A673 (cell line): ENCODE measurements at regions of chr6 and their contacts with region 1.

Region 1: DNA sequence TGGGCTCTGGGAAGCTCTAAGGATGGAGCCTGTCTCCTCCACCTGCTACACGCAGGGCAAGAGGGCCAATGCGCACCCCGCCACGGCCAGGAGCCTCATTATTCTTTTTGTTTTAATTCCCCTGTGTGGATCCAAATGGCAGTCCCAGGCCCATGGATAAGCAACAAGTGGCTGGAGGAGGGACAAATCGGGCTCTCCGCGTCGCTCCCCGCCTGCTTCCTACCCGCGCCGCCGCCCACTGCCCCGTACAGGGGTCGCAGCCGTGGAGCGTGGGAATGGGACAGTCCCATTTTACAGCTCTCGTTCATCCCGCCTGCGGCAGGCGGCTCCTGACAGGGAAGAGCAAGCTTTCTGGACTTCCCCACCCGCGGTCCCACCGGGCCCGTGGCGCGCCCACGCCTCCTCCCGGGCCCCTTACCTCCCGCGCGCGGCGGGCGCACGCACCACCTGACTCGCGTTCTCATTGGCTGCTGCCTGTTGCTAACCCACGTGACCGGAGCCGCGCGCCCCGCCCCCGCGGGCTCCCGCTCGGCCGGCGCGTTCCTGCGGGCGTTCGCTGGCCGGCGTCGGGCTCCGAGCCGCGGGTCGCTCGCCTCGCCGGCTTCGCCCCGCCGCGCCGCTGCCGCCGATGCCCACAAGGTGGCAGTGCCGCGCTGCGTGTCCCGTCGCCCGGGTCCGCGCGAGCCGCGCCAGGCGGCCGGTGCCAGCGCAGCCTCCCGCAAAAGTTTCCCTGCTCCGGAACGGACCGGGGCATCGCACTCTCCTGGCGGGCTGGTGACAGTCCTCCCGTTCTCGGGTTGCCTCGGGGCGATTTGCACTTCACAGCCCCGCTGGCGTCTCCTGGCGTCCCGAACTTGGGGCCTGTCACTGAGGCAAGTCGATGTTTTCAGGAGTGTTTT is 93.3 kb downstream of the CD83 start:
- DNase-seq: peak; percentile 96
- H3K4me3 ChIP-seq: peak overlapping the region; percentile 54
- H3K27ac ChIP-seq: peak overlapping the region; percentile 91
- H3K4me1 ChIP-seq: peaks cover 38% of the 10 kb centered on the region
- H3K27me3 ChIP-seq: no peaks in the 10 kb centered on the region
- CTCF ChIP-seq: peak; percentile 47; the same call in 1 of the 2 replicates

Region 2: GRCh38 chr6:14117158-14118090 is 93.5 kb before region 1 on chr6 and contains the start of gene CD83:
- CTCF ChIA-PET with region 1: no interaction called
- POLR2A ChIA-PET with region 1: no interaction called
- intact Hi-C with region 1: no loop called
- DNase-seq: peak; percentile 65
- H3K4me3 ChIP-seq: peak within 1 kb of the TSS; percentile 70
- H3K27ac ChIP-seq: peak within 1 kb of the TSS; percentile 51
- H3K4me1 ChIP-seq: peaks cover 6% of the 10 kb centered on the region
- H3K27me3 ChIP-seq: no peaks in the 10 kb centered on the region
- CTCF ChIP-seq: 0 out of 2 replicates have a peak, but pooled peaks have one; percentile 18
- total RNA-seq, gene CD83: 14.4 and 15.0 TPM in 2 replicates

Region 3: GRCh38 chr6:14388371-14388770 is 177.5 kb after region 1 on chr6:
- CTCF ChIA-PET with region 1: no interaction called
- POLR2A ChIA-PET with region 1: no interaction called
- intact Hi-C with region 1: no loop called
- DNase-seq: no peak
- H3K4me3 ChIP-seq: no peak overlapping the region
- H3K27ac ChIP-seq: no peak overlapping the region
- H3K4me1 ChIP-seq: peaks cover 30% of the 10 kb centered on the region
- H3K27me3 ChIP-seq: no peaks in the 10 kb centered on the region
- CTCF ChIP-seq: no peak

Region 4: DNA sequence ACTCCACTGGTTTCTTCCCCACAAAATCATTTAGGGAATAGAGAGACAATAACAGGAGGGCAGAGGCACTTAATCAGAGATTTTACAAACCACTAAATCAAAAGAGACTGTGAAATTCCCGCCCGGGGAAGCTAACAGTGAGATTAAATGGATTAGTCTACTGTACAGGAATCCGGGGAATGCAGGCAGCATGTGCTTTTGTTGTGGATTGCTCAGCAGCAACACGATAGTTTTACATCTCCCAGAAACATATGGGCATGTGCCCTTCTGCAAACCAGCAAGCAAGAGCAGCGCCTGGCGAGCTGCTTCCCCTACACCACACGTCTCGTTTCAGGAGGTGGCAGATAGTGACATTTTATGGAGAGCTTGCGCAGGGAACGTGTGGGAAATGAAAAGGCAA is 288.9 kb after region 1 on chr6:
- CTCF ChIA-PET with region 1: no interaction called
- POLR2A ChIA-PET with region 1: no interaction called
- intact Hi-C with region 1: loop called (anchors 5 kb)
- DNase-seq: peak; percentile 90
- H3K4me3 ChIP-seq: no peak overlapping the region
- H3K27ac ChIP-seq: peak overlapping the region; percentile 15
- H3K4me1 ChIP-seq: peaks cover 27% of the 10 kb centered on the region
- H3K27me3 ChIP-seq: no peaks in the 10 kb centered on the region
- CTCF ChIP-seq: 0 out of 2 replicates have a peak, but pooled peaks have one; percentile 18

Region 5: GRCh38 chr6:14524319-14524718 is 313.4 kb after region 1 on chr6:
- CTCF ChIA-PET with region 1: no interaction called
- POLR2A ChIA-PET with region 1: no interaction called
- intact Hi-C with region 1: no loop called
- DNase-seq: no peak
- H3K4me3 ChIP-seq: no peak overlapping the region
- H3K27ac ChIP-seq: no peak overlapping the region
- H3K4me1 ChIP-seq: no peaks in the 10 kb centered on the region
- H3K27me3 ChIP-seq: no peaks in the 10 kb centered on the region
- CTCF ChIP-seq: no peak

Region 6: DNA sequence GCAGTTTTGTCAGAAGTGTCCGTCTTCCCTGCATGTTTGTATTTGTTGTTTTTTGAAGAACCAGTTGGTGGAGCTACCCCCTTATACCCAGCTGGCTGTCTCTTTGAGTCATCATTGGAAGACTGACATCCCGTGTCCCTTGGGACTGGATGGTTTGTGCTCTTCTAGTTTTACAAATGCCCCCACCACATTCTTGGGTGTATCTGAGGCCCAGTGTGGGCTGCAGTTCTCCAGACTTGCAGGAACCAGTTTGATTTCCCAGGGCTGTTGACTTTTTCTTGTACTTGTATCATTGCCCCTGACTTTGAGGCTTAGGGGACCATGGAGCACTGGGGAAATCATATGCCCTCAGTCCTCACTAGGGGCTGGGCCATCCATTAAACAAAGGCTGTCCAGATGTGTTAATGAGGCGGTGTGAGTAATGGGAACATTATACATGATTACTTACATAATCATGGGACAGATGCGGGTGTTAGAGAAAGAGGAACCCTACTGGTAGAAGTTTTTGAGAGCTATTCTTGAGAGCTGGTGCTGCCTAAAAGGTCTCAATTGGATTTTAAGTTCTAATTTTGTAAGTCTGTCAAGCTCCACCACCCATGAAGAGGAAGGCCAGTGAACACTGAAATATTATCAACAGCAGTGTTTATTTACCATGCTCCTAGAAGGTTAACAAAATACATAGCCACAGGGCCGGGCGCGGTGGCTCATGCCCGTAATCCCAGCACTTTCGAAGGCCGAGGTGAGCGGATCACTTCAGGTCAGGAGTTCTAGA is 1043.3 kb after region 1 on chr6:
- CTCF ChIA-PET with region 1: no interaction called
- POLR2A ChIA-PET with region 1: no interaction called
- intact Hi-C with region 1: loop called (anchors 5 kb)
- DNase-seq: peak; percentile 96
- H3K4me3 ChIP-seq: no peak overlapping the region
- H3K27ac ChIP-seq: peak overlapping the region; percentile 5
- H3K4me1 ChIP-seq: peaks cover 94% of the 10 kb centered on the region
- H3K27me3 ChIP-seq: no peaks in the 10 kb centered on the region
- CTCF ChIP-seq: peak; percentile 56